ENCODE measurements at regions of chr12 and their contacts with region 1.

Region 1: GRCh38 chr12:69570545-69571399 is 14.5 kb upstream of the CCT2 start:
- DNase-seq: peak; percentile 63
- ATAC-seq: peak; percentile 87
- H3K4me3 Mint-ChIP-seq: no peak overlapping the region
- H3K27ac Mint-ChIP-seq: no peak overlapping the region
- H3K4me1 Mint-ChIP-seq: peaks cover 2% of the 10 kb centered on the region
- H3K27me3 Mint-ChIP-seq: no peaks in the 10 kb centered on the region

Region 2: GRCh38 chr12:69290545-69291277 is 280.1 kb before region 1 on chr12:
- CTCF ChIA-PET with region 1: interaction called, 30 read pairs
- POLR2A ChIA-PET with region 1: no interaction called
- DNase-seq: peak; percentile 89
- ATAC-seq: peak; percentile 99
- H3K4me3 Mint-ChIP-seq: no peak overlapping the region
- H3K27ac Mint-ChIP-seq: no peak overlapping the region
- H3K4me1 Mint-ChIP-seq: peaks cover 7% of the 10 kb centered on the region
- H3K27me3 Mint-ChIP-seq: peaks cover 42% of the 10 kb centered on the region

Region 3: GRCh38 chr12:69366796-69367195 is 204.0 kb before region 1 on chr12:
- CTCF ChIA-PET with region 1: interaction called, 11 read pairs
- POLR2A ChIA-PET with region 1: no interaction called
- DNase-seq: no peak
- ATAC-seq: no peak
- H3K4me3 Mint-ChIP-seq: no peak overlapping the region
- H3K27ac Mint-ChIP-seq: no peak overlapping the region
- H3K4me1 Mint-ChIP-seq: peaks cover 15% of the 10 kb centered on the region
- H3K27me3 Mint-ChIP-seq: no peaks in the 10 kb centered on the region

Region 4: GRCh38 chr12:69470189-69471075 is 100.3 kb before region 1 on chr12 and contains the start of gene FRS2:
- CTCF ChIA-PET with region 1: interaction called, 13 read pairs
- POLR2A ChIA-PET with region 1: interaction called, 3 read pairs
- DNase-seq: peak; percentile 89
- ATAC-seq: peak; percentile 99
- H3K4me3 Mint-ChIP-seq: peak within 1 kb of the TSS; percentile 98
- H3K27ac Mint-ChIP-seq: peak within 1 kb of the TSS; percentile 97
- H3K4me1 Mint-ChIP-seq: peaks cover 34% of the 10 kb centered on the region
- H3K27me3 Mint-ChIP-seq: no peaks in the 10 kb centered on the region
- total RNA-seq, gene FRS2: 13.0 to 13.7 TPM

Region 5: GRCh38 chr12:69585189-69586062 is 14.7 kb after region 1 on chr12 and contains the start of gene CCT2:
- CTCF ChIA-PET with region 1: interaction called, 22 read pairs
- POLR2A ChIA-PET with region 1: no interaction called
- DNase-seq: peak; percentile 98
- ATAC-seq: peak; percentile 92
- H3K4me3 Mint-ChIP-seq: peak within 1 kb of the TSS; percentile 96
- H3K27ac Mint-ChIP-seq: peak within 1 kb of the TSS; percentile 98
- H3K4me1 Mint-ChIP-seq: peaks cover 13% of the 10 kb centered on the region
- H3K27me3 Mint-ChIP-seq: no peaks in the 10 kb centered on the region
- total RNA-seq, gene CCT2: 238 to 252 TPM

Region 6: GRCh38 chr12:69633061-69633460 is 62.3 kb after region 1 on chr12:
- CTCF ChIA-PET with region 1: no interaction called
- POLR2A ChIA-PET with region 1: no interaction called
- DNase-seq: no peak
- ATAC-seq: no peak
- H3K4me3 Mint-ChIP-seq: no peak overlapping the region
- H3K27ac Mint-ChIP-seq: no peak overlapping the region
- H3K4me1 Mint-ChIP-seq: no peaks in the 10 kb centered on the region
- H3K27me3 Mint-ChIP-seq: peaks cover 2% of the 10 kb centered on the region